Caco-2 (cell line): ENCODE measurements at regions of chr3 and their contacts with region 1.

Region 1: DNA sequence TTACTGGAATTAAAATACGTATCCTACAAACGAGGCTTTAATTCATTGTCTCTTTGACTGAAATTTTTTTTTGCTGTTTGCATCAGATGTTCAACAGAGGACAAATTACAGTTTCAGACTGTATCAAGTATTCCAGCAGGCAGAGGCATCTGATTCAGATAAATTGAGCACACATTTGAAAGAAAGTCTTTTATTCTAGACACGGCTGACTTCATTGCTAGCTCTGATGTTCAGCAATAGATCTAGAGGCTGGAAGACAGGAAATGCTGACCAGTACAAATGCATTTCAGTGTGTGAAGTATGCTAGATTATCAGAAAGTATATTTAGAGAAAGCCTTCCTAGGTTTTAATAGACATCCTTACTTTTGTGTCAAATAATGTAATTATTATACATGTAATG is 472.2 kb downstream of the NLGN1 start:
- DNase-seq: no peak
- H3K4me3 ChIP-seq: no peak overlapping the region
- H3K4me3 Mint-ChIP-seq: no peak overlapping the region
- H3K27ac Mint-ChIP-seq: no peak overlapping the region
- H3K4me1 ChIP-seq: no peaks in the 10 kb centered on the region
- H3K4me1 Mint-ChIP-seq: no peaks in the 10 kb centered on the region
- H3K27me3 ChIP-seq: no peaks in the 10 kb centered on the region
- H3K27me3 Mint-ChIP-seq: peaks cover 3% of the 10 kb centered on the region
- CTCF ChIP-seq: no peak

Region 2: DNA sequence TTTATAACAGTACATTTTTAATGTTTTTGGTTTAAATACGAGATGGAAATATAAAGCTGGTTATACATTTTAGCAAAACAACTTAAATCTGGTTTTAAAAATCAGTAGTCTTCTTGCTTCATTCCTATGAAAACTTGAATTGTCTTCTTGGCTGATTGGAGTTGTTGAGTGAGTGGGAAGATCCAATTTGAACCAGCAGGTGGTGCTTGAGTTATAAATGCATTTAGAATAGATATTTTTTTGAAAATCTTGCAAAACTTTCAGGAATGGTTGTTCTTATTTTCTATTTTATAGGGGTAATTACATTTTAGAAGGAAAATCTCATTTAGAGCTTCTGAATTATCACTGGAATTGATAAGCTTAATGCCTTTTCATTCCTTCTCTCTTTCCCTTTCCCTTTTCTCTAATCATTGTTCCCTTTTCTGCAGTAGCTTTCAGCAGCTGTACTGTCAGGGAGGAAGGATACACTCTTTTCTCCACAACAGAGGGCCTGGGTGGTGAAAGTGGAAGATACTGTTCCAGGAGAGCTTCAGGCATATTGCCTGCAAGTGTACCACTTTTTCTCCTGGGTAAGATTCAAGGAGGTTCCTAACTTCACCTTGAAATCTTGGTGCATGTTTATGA is 136.6 kb before region 1 on chr3:
- CTCF ChIA-PET with region 1: no interaction called
- POLR2A ChIA-PET with region 1: no interaction called
- intact Hi-C with region 1: loop called (anchors 5 kb)
- DNase-seq: peak in 1 of 2 experiments; percentile 20
- H3K4me3 ChIP-seq: no peak overlapping the region
- H3K4me3 Mint-ChIP-seq: no peak overlapping the region
- H3K27ac Mint-ChIP-seq: no peak overlapping the region
- H3K4me1 ChIP-seq: no peaks in the 10 kb centered on the region
- H3K4me1 Mint-ChIP-seq: no peaks in the 10 kb centered on the region
- H3K27me3 ChIP-seq: no peaks in the 10 kb centered on the region
- H3K27me3 Mint-ChIP-seq: no peaks in the 10 kb centered on the region
- CTCF ChIP-seq: peak; percentile 38 to 48